CD4-positive, alpha-beta T cell (primary cell): ENCODE measurements at regions of chr11 and their contacts with region 1.

Region 1: DNA sequence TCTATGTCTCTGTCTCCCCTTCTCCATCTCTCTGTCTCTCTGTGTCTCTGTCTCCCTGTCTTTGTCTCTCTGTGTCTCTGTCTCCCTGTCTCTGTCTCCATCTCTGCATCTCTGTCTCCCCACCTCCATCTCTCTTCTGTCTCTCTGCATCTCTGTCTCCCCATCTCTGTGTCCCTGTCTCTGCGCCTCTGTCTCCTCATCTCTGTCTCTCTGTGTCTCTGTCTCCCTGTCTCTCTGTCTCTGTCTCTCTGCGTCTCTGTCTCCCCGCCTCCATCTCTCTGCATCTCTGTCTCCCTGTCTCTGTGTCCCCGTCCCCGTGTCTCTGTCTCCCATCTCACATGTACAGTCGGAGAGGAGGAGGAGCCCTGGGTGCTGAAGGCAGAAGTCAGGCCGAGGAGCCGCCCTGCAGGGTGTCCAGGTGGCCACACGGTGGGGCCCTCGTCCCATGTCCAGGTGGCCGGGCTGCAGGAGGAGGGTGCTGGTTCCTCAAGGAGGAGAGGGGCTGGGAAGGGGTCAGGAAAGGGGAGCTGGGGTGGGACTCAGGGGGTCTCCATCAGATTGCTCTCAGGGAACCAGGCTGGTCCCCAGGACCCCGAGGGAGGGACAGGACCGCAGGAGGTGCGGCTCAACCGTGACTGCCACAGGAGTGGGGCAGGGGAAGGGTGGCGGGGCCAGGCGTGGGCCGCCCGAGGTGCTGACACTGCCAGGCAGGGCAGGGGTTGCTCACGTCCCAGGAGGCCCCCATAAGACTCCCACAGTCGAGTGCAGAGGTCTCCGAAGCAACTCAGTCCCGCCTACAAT is 25.6 kb upstream of the TH start:
- DNase-seq: peak; percentile 53 to 84 (median 62)
- ATAC-seq: peak; percentile 90
- H3K4me3 ChIP-seq: no peak overlapping the region
- H3K4me3 Mint-ChIP-seq: no peak overlapping the region
- H3K27ac ChIP-seq: no peak overlapping the region
- H3K27ac Mint-ChIP-seq: no peak overlapping the region
- H3K4me1 ChIP-seq: peaks cover 14% of the 10 kb centered on the region
- H3K4me1 Mint-ChIP-seq: peaks cover 13% of the 10 kb centered on the region
- H3K27me3 ChIP-seq: no peaks in the 10 kb centered on the region
- H3K27me3 Mint-ChIP-seq: no peaks in the 10 kb centered on the region
- CTCF ChIP-seq: peak; percentile 63

Region 2: GRCh38 chr11:2269601-2270321 is 72.6 kb after region 1 on chr11:
- CTCF ChIA-PET with region 1: no interaction called
- POLR2A ChIA-PET with region 1: no interaction called
- intact Hi-C with region 1: loop called in 1 of 2 experiments (anchors 2 kb)
- DNase-seq: peak in 11 of 14 experiments; percentile 13 to 80 (median 33)
- ATAC-seq: peak; percentile 65
- H3K4me3 ChIP-seq: peak overlapping the region; percentile 42
- H3K4me3 Mint-ChIP-seq: no peak overlapping the region
- H3K27ac ChIP-seq: no peak overlapping the region
- H3K27ac Mint-ChIP-seq: no peak overlapping the region
- H3K4me1 ChIP-seq: peaks cover 54% of the 10 kb centered on the region
- H3K4me1 Mint-ChIP-seq: peaks cover 19% of the 10 kb centered on the region
- H3K27me3 ChIP-seq: peaks cover 29 to 35% of the 10 kb centered on the region in 2 experiments
- H3K27me3 Mint-ChIP-seq: peaks cover 42% of the 10 kb centered on the region
- CTCF ChIP-seq: no peak

Region 3: DNA sequence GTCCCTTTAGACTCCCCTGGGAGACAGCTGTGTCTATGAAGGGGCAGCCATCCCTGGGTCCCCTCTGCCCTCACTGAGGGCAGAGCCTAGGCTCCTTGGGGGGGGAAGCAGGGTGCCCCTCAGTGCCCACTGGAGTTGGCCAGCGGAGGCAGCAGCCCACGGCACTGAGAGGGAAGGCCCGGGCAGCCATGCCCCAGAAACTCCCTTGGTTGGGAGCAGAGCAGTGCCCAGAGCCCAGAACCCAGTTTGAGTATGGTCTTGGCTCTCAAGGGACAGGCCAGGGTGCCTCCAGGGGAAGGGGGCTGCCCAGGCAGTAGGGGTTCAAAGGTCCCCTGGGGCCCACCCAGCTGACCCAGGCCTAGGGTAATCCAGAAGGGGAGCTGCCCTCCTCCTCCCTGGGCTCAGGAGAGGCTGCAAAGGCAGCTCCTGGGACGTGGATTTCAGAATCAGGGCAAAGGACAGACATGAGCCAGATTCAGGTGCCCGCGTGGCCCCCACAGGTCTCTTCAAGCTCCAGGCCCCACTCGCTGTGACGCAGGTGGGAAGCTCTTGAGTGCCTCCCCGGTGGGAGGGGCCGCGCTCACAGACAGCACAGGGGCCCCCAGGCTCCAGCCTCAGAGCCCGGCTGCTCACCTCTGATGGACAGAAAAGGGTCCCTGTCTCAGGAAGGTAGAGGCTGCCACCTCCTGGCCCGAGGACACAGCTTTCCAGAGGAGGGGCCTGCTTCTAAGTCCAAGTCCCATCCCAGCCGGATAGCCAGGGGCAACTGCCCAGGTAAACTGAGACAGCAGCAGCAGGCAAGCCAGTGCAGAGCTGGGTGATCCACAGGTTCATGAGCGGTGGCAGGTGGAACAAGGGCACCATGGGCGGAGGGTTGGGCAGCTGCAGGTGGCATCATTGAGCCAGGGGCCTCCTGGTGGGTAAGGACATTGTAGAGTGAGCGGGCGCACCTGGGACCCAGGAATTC is 101.9 kb after region 1 on chr11:
- CTCF ChIA-PET with region 1: no interaction called
- POLR2A ChIA-PET with region 1: no interaction called
- intact Hi-C with region 1: loop called (anchors 2 to 10 kb)
- DNase-seq: peak in 4 of 14 experiments; percentile 18 to 31 (median 23)
- ATAC-seq: no peak
- H3K4me3 ChIP-seq: no peak overlapping the region
- H3K4me3 Mint-ChIP-seq: peak overlapping the region; percentile 87
- H3K27ac ChIP-seq: peak overlapping the region; percentile 12 to 54
- H3K27ac Mint-ChIP-seq: peak overlapping the region; percentile 89
- H3K4me1 ChIP-seq: peaks cover 49% of the 10 kb centered on the region
- H3K4me1 Mint-ChIP-seq: peaks cover 53% of the 10 kb centered on the region
- H3K27me3 ChIP-seq: no peaks in the 10 kb centered on the region
- H3K27me3 Mint-ChIP-seq: no peaks in the 10 kb centered on the region
- CTCF ChIP-seq: peak; percentile 22